GM12878 (cell line): ENCODE measurements at regions of chr7 and their contacts with region 1.

Region 1: DNA sequence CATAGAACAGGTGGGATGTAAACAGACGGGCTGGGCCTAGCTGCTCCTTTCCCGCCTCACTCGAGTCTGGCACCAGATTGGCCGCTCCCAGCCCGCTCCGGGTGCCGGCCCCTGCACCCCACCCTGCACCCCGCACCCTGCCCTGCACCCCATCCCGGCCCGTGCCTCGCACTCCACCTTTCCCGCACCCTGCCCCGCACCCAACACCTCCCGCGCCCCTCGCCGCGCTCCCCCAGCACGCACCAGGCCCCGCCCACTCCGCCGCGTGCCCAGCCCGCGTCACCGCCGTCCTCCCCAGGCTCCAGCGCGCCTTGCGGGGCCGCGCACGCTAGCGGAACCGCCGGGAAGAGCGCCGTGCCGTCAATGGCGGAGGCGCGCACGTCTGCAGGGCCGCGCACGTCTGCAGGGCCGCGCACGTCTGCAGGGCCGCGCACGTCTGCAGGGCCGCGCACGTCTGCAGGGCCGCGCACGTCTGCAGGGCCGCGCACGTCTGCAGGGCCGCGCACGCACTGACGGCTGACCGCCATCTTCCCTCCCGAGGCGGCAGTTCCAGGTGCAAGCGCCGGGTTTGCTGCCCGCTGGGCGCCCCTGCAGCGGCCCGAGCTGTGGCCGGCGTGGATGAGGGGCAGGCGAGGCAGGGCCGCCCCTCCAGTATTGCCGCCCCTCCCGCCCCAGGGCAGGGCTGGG is at the start of gene UBE3C:
- DNase-seq: peak; percentile 59
- ATAC-seq: peak; percentile 90
- H3K4me3 ChIP-seq: peak within 1 kb of the TSS; percentile 89
- H3K27ac ChIP-seq: peak within 1 kb of the TSS; percentile 71
- H3K4me1 ChIP-seq: peaks cover 7% of the 10 kb centered on the region; the same call in 1 of the 2 replicates
- H3K27me3 ChIP-seq: no peaks in the 10 kb centered on the region
- CTCF ChIP-seq: no peak
- EP300 ChIP-seq: no peak
- POLR2A ChIP-seq: peak; percentile 80
- RAD21 ChIP-seq: no peak
- polyA plus RNA-seq, gene UBE3C: 7.9 to 10.8 TPM

Region 2: GRCh38 chr7:157010588-157011332 is 127.8 kb before region 1 on chr7 and contains the start of gene MNX1:
- CTCF ChIA-PET with region 1: interaction called, 3 read pairs
- POLR2A ChIA-PET with region 1: interaction called, 6 read pairs
- RAD21 ChIA-PET with region 1: interaction called, 4 read pairs
- SMC1A ChIA-PET with region 1: no interaction called
- in situ Hi-C with region 1: no loop called
- intact Hi-C with region 1: loop called (anchors 2 kb)
- DNase-seq: no peak
- ATAC-seq: peak; percentile 92
- H3K4me3 ChIP-seq: peak within 1 kb of the TSS; percentile 74
- H3K27ac ChIP-seq: no peak within 1 kb of the TSS
- H3K4me1 ChIP-seq: peaks cover 19% of the 10 kb centered on the region
- H3K27me3 ChIP-seq: peaks cover 0 to 12% of the 10 kb centered on the region in 2 experiments; a peak in 1 of 4 replicates
- CTCF ChIP-seq: no peak
- EP300 ChIP-seq: no peak
- POLR2A ChIP-seq: peak; percentile 55
- RAD21 ChIP-seq: no peak
- polyA plus RNA-seq, gene MNX1: 0.22 TPM in 1 of 2 experiments, not detected in the other

Region 3: DNA sequence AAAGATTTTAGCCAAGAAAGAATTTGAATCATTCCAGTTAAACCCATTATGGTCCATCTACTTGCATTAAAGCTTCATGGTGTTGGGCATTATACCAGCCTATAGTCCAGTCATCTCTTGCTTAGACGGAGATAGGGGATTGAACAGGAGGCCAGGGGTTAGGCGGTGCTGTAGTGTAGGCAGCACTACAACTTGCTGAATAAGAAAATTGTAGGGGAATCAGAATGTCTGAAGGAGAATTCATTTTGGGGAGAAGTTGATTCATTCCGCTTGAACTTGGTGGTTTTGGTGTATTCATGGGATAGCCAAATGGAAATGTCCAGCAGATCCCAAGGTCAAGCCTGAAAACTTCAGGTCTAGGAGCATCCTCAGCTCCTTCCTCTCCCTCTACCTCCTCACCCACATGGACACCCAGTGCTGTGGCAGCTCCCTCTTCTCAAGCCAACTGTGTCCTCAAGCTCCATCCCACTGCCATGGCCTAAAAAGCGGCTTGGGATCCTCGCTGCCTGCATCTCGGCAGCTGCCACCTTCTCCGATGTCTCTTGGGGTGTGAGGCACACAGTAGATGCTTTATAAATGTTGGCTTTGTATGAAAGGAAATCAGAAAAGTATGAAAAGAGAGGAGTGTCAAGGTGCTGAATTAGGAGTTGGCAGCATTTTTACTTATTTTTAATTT is 64.5 kb before region 1 on chr7:
- CTCF ChIA-PET with region 1: no interaction called
- POLR2A ChIA-PET with region 1: no interaction called
- RAD21 ChIA-PET with region 1: no interaction called
- SMC1A ChIA-PET with region 1: no interaction called
- in situ Hi-C with region 1: no loop called
- intact Hi-C with region 1: no loop called
- DNase-seq: no peak
- ATAC-seq: no peak
- H3K4me3 ChIP-seq: no peak overlapping the region
- H3K27ac ChIP-seq: no peak overlapping the region
- H3K4me1 ChIP-seq: no peaks in the 10 kb centered on the region
- H3K27me3 ChIP-seq: peaks cover 2 to 4% of the 10 kb centered on the region in 2 experiments; a peak in 3 of 4 replicates
- CTCF ChIP-seq: no peak
- EP300 ChIP-seq: no peak
- POLR2A ChIP-seq: no peak
- RAD21 ChIP-seq: no peak

Region 4: DNA sequence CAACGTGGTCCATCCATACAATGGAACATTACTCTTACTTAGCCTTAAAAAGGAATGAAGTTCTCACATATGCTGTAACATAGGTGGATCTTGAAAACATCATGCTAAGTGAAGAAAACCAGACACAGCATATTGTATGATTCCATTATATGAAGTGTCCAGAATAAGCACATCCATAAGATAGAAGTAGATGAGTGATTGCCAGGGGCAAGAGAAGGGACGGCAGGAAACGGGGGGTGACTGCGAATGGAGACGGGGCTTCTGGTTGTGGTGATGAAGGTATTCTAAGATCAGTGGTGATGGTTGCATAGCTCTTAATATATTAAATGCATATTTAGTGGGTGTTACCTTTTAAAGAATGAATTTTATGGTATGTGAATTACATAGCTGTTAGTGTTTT is 30.0 kb after region 1 on chr7:
- CTCF ChIA-PET with region 1: no interaction called
- POLR2A ChIA-PET with region 1: no interaction called
- RAD21 ChIA-PET with region 1: no interaction called
- SMC1A ChIA-PET with region 1: no interaction called
- in situ Hi-C with region 1: no loop called
- intact Hi-C with region 1: no loop called
- DNase-seq: no peak
- ATAC-seq: no peak
- H3K4me3 ChIP-seq: no peak overlapping the region
- H3K27ac ChIP-seq: no peak overlapping the region
- H3K4me1 ChIP-seq: no peaks in the 10 kb centered on the region
- H3K27me3 ChIP-seq: no peaks in the 10 kb centered on the region
- CTCF ChIP-seq: no peak
- EP300 ChIP-seq: no peak
- POLR2A ChIP-seq: no peak
- RAD21 ChIP-seq: no peak

Region 5: DNA sequence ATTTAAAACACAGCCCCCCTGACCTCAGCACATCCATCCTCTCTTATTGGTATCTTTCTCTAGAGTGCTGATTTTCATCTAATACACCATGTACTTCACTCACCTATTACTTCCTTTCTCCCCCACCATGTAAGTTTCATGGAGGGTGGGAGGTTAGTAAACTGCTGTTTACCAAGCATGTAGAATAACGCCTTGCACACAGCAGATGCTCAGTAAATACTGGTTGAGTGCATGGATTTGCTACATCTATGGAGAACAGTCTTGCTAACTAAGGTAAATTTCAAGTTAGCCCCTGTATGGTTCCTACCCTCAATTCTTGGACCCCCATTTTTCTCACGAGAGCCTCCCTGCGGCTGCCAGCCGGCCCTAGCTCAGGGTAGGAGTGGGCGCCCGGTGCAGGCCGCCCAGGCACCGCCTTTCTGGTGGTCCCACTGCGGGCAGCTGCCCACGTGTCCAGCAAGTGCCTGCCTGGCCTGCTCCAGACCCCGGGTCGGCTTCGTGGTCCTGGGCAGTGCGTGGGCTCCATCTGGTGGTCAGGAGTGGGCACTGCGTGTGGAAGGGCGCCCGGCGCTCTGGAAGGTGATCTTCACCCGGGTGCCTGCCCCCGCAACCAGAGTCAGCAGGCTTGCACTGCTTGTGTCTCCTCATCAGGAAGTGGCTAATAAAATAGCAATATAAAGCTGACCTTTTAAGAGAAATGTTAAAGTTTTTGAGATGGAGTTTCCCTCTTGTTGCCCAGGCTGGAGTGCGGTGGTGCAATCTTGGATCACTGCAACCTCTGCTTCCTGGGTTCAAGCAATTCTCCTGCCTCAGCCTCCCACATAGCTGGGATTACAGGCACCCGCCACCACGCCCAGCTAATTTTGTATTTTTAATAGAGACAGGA is 134.9 kb after region 1 on chr7:
- CTCF ChIA-PET with region 1: no interaction called
- POLR2A ChIA-PET with region 1: no interaction called
- RAD21 ChIA-PET with region 1: no interaction called
- SMC1A ChIA-PET with region 1: no interaction called
- in situ Hi-C with region 1: no loop called
- intact Hi-C with region 1: loop called (anchors 5 kb)
- DNase-seq: no peak
- ATAC-seq: peak; percentile 91
- H3K4me3 ChIP-seq: no peak overlapping the region
- H3K27ac ChIP-seq: no peak overlapping the region
- H3K4me1 ChIP-seq: no peaks in the 10 kb centered on the region
- H3K27me3 ChIP-seq: no peaks in the 10 kb centered on the region; a peak in 1 of 4 replicates
- CTCF ChIP-seq: peak; percentile 95 to 99 (median 96)
- EP300 ChIP-seq: no peak
- POLR2A ChIP-seq: no peak
- RAD21 ChIP-seq: peak; percentile 87